Vagina (tissue), 2 donors: ENCODE measurements at regions of chr15 and their contacts with region 1.

Region 1: GRCh38 chr15:77186594-77187011 is 115.7 kb upstream of the TSPAN3 start:
- DNase-seq: no peak
- H3K4me3 ChIP-seq: no peak overlapping the region
- H3K27ac ChIP-seq: peak overlapping the region; percentile 63
- H3K4me1 ChIP-seq: peaks cover 20% of the 10 kb centered on the region
- H3K27me3 ChIP-seq: no peaks in the 10 kb centered on the region
- CTCF ChIP-seq: peak in 1 of 3 experiments; percentile 19
- POLR2A ChIP-seq: no peak

Region 2: DNA sequence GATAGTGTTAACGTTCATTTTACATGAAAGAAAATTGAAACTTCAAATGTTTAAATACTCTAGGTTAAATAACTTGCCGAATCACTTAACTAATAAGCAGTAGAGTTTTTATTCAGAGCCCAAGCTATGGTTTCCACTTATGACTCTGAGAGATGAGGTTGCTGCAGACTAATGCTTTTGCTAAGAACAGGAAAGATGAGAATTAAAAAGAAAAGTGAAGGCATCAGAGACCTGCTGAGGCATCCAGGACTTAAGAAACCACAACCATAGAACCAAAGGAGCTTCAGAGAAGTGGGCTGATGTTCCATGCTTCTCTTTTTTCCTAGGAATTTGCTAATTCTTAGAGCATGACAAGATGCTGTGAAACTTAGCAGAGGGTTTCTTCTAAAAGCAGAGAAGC is 243.6 kb after region 1 on chr15:
- intact Hi-C with region 1: no loop called
- DNase-seq: no peak
- H3K4me3 ChIP-seq: no peak overlapping the region
- H3K27ac ChIP-seq: no peak overlapping the region
- H3K4me1 ChIP-seq: peaks cover 10% of the 10 kb centered on the region
- H3K27me3 ChIP-seq: no peaks in the 10 kb centered on the region
- CTCF ChIP-seq: no peak
- POLR2A ChIP-seq: no peak

Region 3: DNA sequence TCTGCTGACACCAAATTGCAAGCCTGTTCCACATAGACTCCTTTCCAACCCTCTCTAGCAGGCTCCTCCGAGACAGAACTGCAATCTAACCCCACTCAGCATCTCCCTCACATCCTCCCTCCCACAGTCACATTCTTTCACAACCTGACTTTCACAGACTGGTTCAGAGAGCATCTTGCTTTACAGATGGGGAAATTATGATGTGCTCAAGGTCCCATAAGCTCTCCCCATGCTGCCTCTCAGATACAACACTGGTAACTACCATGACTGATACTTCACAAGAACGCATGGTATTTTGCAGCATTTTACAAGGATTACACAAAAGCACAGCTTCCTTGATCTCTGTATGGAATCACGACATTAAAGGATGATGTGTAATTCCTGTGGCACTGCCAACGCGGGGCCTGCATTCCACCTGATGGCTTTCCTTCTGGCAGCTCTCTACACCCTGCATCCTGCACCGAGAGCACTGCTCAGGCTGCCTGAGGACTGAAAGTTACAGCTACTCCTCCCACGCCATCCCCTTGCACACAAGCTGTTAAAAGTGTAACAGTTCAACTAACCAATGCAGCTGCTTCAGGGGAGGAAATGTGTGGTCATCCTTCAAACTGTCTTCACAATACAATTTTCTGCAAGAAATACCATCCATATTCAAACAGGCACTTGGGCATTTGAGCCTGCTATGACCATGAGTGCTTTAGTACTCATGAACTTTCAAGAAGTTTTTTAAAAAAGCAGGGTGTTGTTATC is 863.3 kb after region 1 on chr15:
- intact Hi-C with region 1: loop called (anchors 5 kb)
- DNase-seq: no peak
- H3K4me3 ChIP-seq: no peak overlapping the region
- H3K27ac ChIP-seq: peak overlapping the region; percentile 80
- H3K4me1 ChIP-seq: peaks cover 88% of the 10 kb centered on the region
- H3K27me3 ChIP-seq: no peaks in the 10 kb centered on the region
- CTCF ChIP-seq: no peak
- POLR2A ChIP-seq: no peak